ENCODE measurements at regions of chr18 and their contacts with region 1.

Region 1: GRCh38 chr18:24502644-24503523 is 42.4 kb downstream of the HRH4 start:
- DNase-seq: no peak
- ATAC-seq: no peak
- H3K4me3 Mint-ChIP-seq: no peak overlapping the region
- H3K27ac Mint-ChIP-seq: no peak overlapping the region
- H3K4me1 Mint-ChIP-seq: peaks cover 3% of the 10 kb centered on the region; the same call in 1 of the 2 replicates
- H3K27me3 Mint-ChIP-seq: no peaks in the 10 kb centered on the region; the same call in 1 of the 2 replicates
- CTCF ChIP-seq: no peak

Region 2: DNA sequence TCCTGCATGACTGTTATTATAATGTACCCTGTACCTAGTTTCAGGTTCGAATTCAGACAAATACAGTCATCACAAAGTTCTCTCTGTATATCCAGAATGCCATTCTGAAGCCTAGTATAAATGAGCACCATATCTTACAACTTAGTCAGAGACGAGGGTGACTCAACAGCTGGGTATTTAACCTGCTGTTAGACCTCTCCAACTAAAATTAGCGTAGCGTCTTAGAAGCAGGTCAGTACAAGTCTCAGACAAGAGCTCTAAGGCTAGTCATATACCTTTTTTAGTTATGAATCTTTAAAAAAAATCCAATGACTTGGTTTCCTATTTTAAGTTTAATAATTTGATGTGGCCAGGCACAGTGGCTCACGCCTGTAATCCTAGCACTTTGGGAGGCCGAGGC is 289.9 kb before region 1 on chr18:
- CTCF ChIA-PET with region 1: no interaction called
- POLR2A ChIA-PET with region 1: no interaction called
- DNase-seq: no peak
- ATAC-seq: no peak
- H3K4me3 Mint-ChIP-seq: no peak overlapping the region
- H3K27ac Mint-ChIP-seq: no peak overlapping the region
- H3K4me1 Mint-ChIP-seq: peaks cover 30% of the 10 kb centered on the region
- H3K27me3 Mint-ChIP-seq: no peaks in the 10 kb centered on the region
- CTCF ChIP-seq: no peak

Region 3: GRCh38 chr18:24465486-24465885 is 37.4 kb before region 1 on chr18:
- CTCF ChIA-PET with region 1: no interaction called
- POLR2A ChIA-PET with region 1: no interaction called
- DNase-seq: no peak
- ATAC-seq: no peak
- H3K4me3 Mint-ChIP-seq: no peak overlapping the region
- H3K27ac Mint-ChIP-seq: no peak overlapping the region
- H3K4me1 Mint-ChIP-seq: peaks cover 9% of the 10 kb centered on the region
- H3K27me3 Mint-ChIP-seq: no peaks in the 10 kb centered on the region
- CTCF ChIP-seq: no peak

Region 4: GRCh38 chr18:24514439-24514838 is 11.6 kb after region 1 on chr18:
- CTCF ChIA-PET with region 1: interaction called, 13 read pairs
- POLR2A ChIA-PET with region 1: no interaction called
- DNase-seq: no peak
- ATAC-seq: peak; percentile 95
- H3K4me3 Mint-ChIP-seq: no peak overlapping the region
- H3K27ac Mint-ChIP-seq: no peak overlapping the region
- H3K4me1 Mint-ChIP-seq: no peaks in the 10 kb centered on the region
- H3K27me3 Mint-ChIP-seq: no peaks in the 10 kb centered on the region
- CTCF ChIP-seq: no peak

Region 5: DNA sequence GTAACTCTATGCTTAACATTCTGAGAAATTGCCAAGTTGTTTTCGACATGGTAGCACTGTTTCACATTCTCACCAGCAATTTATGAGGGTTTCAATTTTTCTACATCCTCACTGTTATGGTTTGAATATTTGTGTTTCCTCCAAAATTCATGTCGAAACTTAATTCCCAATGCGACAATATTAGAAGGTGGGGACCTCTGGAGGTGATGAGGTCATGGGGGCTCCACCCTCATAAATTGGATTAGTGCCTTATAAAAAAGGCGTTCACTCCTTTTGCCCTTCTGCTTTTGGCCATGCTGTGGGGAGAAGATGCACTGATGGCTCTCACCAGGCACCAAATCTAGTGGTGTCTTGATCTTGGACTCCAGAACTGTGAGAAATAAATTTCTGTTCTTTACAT is 67.8 kb after region 1 on chr18:
- CTCF ChIA-PET with region 1: no interaction called
- POLR2A ChIA-PET with region 1: no interaction called
- DNase-seq: no peak
- ATAC-seq: no peak
- H3K4me3 Mint-ChIP-seq: no peak overlapping the region
- H3K27ac Mint-ChIP-seq: no peak overlapping the region
- H3K4me1 Mint-ChIP-seq: 0 out of 2 replicates have a peak, but pooled peaks cover 3% of the 10 kb centered on the region
- H3K27me3 Mint-ChIP-seq: no peaks in the 10 kb centered on the region
- CTCF ChIP-seq: no peak

Measured in WTC11 (cell line).